ENCODE measurements at regions of chr7 and their contacts with region 1.

Region 1: DNA sequence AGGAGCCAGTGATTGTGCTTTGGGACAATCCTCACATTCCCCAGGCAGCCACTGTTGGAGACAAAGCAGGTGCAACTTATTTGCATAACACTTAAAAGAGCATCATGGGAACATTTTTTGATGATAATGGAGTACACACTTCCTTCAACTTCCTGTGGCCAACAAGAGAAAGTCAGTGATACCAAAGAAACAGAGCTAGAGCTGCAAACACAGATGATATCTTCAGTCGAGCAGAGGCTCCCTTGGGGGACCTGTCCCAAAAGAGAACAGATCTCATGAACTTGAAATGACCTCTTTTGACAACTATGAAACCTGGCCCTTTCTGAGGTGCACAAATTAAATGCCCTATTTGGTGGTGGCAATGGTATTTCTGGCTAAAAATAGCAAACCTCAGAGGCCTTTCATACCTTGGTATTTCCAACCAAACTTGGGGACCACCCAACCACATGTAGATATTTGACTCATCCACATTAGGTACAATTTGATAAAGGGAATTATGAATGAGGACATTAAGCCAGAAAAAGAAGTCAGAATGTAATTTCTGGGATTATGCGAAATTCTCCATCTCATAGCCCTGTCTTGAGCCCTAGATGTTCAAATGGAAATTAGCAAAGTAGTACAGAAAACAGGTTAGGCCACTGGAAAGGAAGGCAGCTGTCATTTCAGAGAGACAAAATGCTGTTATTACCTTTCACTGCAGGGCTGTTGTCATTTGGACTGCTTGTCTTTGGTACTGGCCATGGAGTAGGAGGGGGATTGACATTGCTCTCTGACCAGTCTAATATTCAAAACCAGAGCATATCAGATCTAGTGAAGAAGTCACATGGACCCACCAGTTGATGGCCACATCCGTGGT is 146.2 kb downstream of the ICA1 start:
- DNase-seq: no peak
- ATAC-seq: peak; percentile 92
- H3K4me3 Mint-ChIP-seq: peak overlapping the region; percentile 46
- H3K27ac Mint-ChIP-seq: peak overlapping the region; percentile 74
- H3K4me1 Mint-ChIP-seq: peaks cover 48% of the 10 kb centered on the region
- H3K27me3 Mint-ChIP-seq: no peaks in the 10 kb centered on the region
- CTCF ChIP-seq: no peak

Region 2: GRCh38 chr7:7789551-7789988 is 326.2 kb before region 1 on chr7:
- CTCF ChIA-PET with region 1: no interaction called
- POLR2A ChIA-PET with region 1: interaction called, 15 read pairs
- intact Hi-C with region 1: no loop called
- DNase-seq: no peak
- ATAC-seq: peak; percentile 75
- H3K4me3 Mint-ChIP-seq: no peak overlapping the region
- H3K27ac Mint-ChIP-seq: peak overlapping the region; percentile 22
- H3K4me1 Mint-ChIP-seq: peaks cover 22% of the 10 kb centered on the region
- H3K27me3 Mint-ChIP-seq: no peaks in the 10 kb centered on the region
- CTCF ChIP-seq: no peak

Region 3: DNA sequence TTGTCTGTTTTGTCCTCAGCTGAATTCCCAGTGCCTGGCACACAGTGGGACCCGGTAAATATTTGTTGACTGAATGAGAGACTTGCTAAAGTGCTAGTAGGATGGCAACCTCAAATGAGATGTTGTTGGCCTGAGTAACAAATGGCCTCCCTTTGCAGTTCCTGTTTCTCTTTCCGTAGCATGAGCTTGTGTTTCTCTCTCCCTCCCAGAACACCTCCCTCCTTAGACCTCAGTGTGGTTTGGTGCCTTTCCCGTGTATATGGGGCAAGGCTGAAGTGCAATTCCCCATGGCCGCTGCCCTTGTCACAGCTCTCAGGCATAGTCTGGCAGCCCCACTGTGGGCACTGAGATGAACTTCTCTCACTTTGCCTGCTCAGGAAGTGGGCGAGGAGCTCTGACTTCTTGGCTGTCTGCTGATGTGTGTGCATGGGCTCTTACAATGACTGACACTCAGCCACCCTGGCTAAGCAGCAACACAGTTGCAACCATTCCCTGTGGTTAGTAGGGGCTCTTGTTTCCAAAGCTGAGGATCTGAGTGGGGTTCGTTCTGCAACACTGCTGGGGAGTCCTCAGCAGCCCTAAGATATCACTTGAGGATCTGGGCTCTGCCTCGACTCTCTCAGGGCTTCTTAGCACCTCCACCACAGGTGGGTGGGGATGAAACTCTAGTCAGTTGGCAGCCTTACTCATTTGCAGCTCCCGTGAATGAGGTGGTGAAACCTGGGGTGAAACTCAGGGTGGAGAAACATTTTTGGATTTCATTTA is 10.1 kb after region 1 on chr7:
- CTCF ChIA-PET with region 1: interaction called, 6 read pairs
- POLR2A ChIA-PET with region 1: interaction called, 23 read pairs
- intact Hi-C with region 1: loop called (anchors 1 kb)
- DNase-seq: peak; percentile 40
- ATAC-seq: peak; percentile 92
- H3K4me3 Mint-ChIP-seq: peak overlapping the region; percentile 71
- H3K27ac Mint-ChIP-seq: peak overlapping the region; percentile 93
- H3K4me1 Mint-ChIP-seq: peaks cover 65% of the 10 kb centered on the region
- H3K27me3 Mint-ChIP-seq: no peaks in the 10 kb centered on the region
- CTCF ChIP-seq: no peak

Region 4: DNA sequence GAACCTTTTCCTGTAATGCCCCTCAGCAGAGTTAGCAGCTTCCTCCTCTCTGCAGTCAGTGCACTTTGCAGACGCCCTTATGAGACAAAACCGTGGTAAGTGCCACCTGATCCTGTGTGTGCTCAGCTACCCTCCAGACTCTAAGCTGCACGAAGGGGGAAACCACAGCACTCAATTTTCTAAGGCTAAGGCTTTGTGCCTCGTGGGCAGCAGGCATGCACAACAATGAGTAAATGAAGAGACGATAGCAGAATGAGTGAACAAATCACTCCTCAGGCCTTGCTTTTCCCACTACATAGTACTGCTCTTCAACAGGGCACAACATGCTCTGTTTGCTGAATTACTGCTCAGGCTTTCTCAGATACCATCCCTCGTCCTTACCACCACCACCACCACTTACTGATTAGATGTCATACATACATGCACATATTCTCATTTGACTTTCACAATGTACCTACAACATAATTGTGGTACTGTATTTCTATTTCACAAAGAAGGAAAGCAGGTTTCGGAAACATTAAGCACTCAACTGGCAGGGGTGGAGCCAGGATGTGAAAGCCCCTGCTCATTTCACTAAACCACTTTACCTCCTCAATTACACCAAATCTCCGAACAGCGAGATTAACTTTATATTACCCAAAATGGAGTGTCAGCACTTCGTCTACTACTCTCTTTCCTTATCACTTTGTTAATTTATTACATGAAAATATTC is 60.8 kb after region 1 on chr7:
- CTCF ChIA-PET with region 1: no interaction called
- POLR2A ChIA-PET with region 1: interaction called, 10 read pairs
- intact Hi-C with region 1: loop called (anchors 1 kb)
- DNase-seq: peak; percentile 21
- ATAC-seq: peak; percentile 89
- H3K4me3 Mint-ChIP-seq: peak overlapping the region; percentile 61
- H3K27ac Mint-ChIP-seq: peak overlapping the region; percentile 91
- H3K4me1 Mint-ChIP-seq: peaks cover 61% of the 10 kb centered on the region
- H3K27me3 Mint-ChIP-seq: no peaks in the 10 kb centered on the region
- CTCF ChIP-seq: no peak